ENCODE measurements at regions of chr3 and their contacts with region 1.

Region 1: GRCh38 chr3:153590051-153590450 is 428.0 kb downstream of the RAP2B start:
- DNase-seq: no peak
- ATAC-seq: no peak
- H3K4me3 ChIP-seq: no peak overlapping the region
- H3K4me3 Mint-ChIP-seq: no peak overlapping the region
- H3K27ac ChIP-seq: no peak overlapping the region
- H3K27ac Mint-ChIP-seq: no peak overlapping the region
- H3K4me1 ChIP-seq: no peaks in the 10 kb centered on the region
- H3K4me1 Mint-ChIP-seq: peaks cover 0 to 6% (median under 1%) of the 10 kb centered on the region in 3 donors
- H3K27me3 ChIP-seq: no peaks in the 10 kb centered on the region
- H3K27me3 Mint-ChIP-seq: no peaks in the 10 kb centered on the region

Region 2: GRCh38 chr3:153209596-153209995 is 380.5 kb before region 1 on chr3:
- CTCF ChIA-PET with region 1: interaction called in 1 of 2 experiments, 15 read pairs
- POLR2A ChIA-PET with region 1: no interaction called
- DNase-seq: peak in 2 of 35 experiments; percentile 19 to 20
- ATAC-seq: no peak
- H3K4me3 ChIP-seq: no peak overlapping the region
- H3K4me3 Mint-ChIP-seq: peak overlapping the region in 2 of 3 donors; percentile 19 to 54
- H3K27ac ChIP-seq: no peak overlapping the region
- H3K27ac Mint-ChIP-seq: peak overlapping the region; percentile 75 to 82
- H3K4me1 ChIP-seq: peaks cover 8 to 15% of the 10 kb centered on the region in 2 experiments
- H3K4me1 Mint-ChIP-seq: peaks cover 37 to 47% (median 37%) of the 10 kb centered on the region in 3 donors
- H3K27me3 ChIP-seq: no peaks in the 10 kb centered on the region
- H3K27me3 Mint-ChIP-seq: no peaks in the 10 kb centered on the region

Measured in T-cell (primary cell).